Mammary epithelial cell (primary cell): ENCODE measurements at regions of chr7 and their contacts with region 1.

Region 1: GRCh38 chr7:35519971-35520809 is 174.7 kb downstream of the HERPUD2 start:
- DNase-seq: peak; percentile 42
- H3K4me3 ChIP-seq: no peak overlapping the region
- H3K27ac ChIP-seq: no peak overlapping the region
- H3K4me1 ChIP-seq: no peaks in the 10 kb centered on the region
- H3K27me3 ChIP-seq: no peaks in the 10 kb centered on the region
- CTCF ChIP-seq: peak; percentile 89 to 93

Region 2: GRCh38 chr7:35185907-35186731 is 334.1 kb before region 1 on chr7:
- CTCF ChIA-PET with region 1: no interaction called
- dilution Hi-C with region 1: no loop called
- in situ Hi-C with region 1: loop called in 1 of 2 experiments (anchors 25 kb)
- intact Hi-C with region 1: loop called (anchors 5 kb)
- DNase-seq: peak; percentile 10
- H3K4me3 ChIP-seq: peak overlapping the region in 2 of 3 experiments; percentile 12 to 19
- H3K27ac ChIP-seq: no peak overlapping the region
- H3K4me1 ChIP-seq: peaks cover 10% of the 10 kb centered on the region
- H3K27me3 ChIP-seq: peaks cover 4% of the 10 kb centered on the region
- CTCF ChIP-seq: no peak

Region 3: DNA sequence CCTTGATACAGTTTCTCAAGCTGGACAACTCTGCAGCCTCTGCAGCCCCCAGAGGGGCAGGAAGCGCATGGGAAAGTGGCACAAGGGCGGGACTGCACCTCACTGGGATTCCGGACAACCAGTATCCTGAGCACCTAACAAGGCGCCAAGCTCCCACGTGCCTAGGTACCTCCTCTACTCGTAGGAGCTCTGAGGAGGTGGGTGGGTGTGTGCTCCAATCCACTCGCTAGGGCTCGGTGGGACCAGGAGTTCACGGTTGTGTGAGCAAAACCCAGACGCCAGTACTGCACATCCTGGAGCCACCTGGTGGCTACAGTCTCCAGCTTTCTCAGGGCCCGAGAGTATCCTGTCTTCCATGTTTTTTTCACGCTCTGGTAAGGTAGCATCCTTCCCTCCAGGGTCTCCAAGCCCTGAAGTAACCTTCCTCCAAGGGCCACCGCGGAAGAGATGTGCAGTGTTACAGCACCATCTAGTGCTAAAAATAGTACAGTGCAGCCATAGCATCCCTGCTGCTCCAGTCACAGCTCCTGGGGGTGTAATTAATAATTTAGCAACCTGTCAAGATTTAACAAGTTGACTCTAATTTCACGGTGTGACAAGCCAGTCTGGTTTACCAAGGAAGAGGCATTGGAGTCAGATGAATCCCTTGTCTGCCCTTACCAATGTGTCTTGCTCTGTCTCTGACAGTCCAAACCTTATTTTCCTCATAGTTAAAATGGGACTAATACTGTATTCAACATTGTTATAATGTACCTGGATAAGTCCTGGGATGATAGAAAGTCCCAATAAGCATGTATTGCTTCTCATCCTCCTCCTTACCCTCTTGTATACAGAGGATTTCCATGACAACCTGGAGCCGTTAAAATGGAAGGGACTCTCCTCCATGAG is 104.4 kb after region 1 on chr7:
- CTCF ChIA-PET with region 1: no interaction called
- dilution Hi-C with region 1: no loop called
- in situ Hi-C with region 1: no loop called
- intact Hi-C with region 1: loop called (anchors 5 kb)
- DNase-seq: peak; percentile 19
- H3K4me3 ChIP-seq: no peak overlapping the region
- H3K27ac ChIP-seq: no peak overlapping the region
- H3K4me1 ChIP-seq: no peaks in the 10 kb centered on the region
- H3K27me3 ChIP-seq: no peaks in the 10 kb centered on the region
- CTCF ChIP-seq: peak; percentile 82 to 84